ENCODE measurements at regions of chr11 and their contacts with region 1.

Region 1: GRCh38 chr11:61899146-61899841 is 7.9 kb upstream of the FADS3 start:
- DNase-seq: peak; percentile 89 to 98 (median 92)
- ATAC-seq: peak; percentile 96
- H3K4me3 ChIP-seq: no peak overlapping the region
- H3K4me3 Mint-ChIP-seq: no peak overlapping the region
- H3K27ac ChIP-seq: no peak overlapping the region
- H3K27ac Mint-ChIP-seq: peak overlapping the region; percentile 3
- H3K4me1 ChIP-seq: peaks cover 5% of the 10 kb centered on the region
- H3K4me1 Mint-ChIP-seq: peaks cover 6% of the 10 kb centered on the region
- H3K27me3 ChIP-seq: no peaks in the 10 kb centered on the region
- H3K27me3 Mint-ChIP-seq: peaks cover 5% of the 10 kb centered on the region
- CTCF ChIP-seq: peak; percentile 98

Region 2: GRCh38 chr11:61871158-61871597 is 28.1 kb before region 1 on chr11:
- CTCF ChIA-PET with region 1: interaction called, 10 read pairs
- POLR2A ChIA-PET with region 1: no interaction called
- intact Hi-C with region 1: loop called in 1 of 2 experiments (anchors 2 kb)
- DNase-seq: peak; percentile 30 to 74 (median 64)
- ATAC-seq: peak; percentile 94
- H3K4me3 ChIP-seq: no peak overlapping the region
- H3K4me3 Mint-ChIP-seq: peak overlapping the region; percentile 64
- H3K27ac ChIP-seq: no peak overlapping the region
- H3K27ac Mint-ChIP-seq: no peak overlapping the region
- H3K4me1 ChIP-seq: no peaks in the 10 kb centered on the region
- H3K4me1 Mint-ChIP-seq: peaks cover 3% of the 10 kb centered on the region
- H3K27me3 ChIP-seq: no peaks in the 10 kb centered on the region
- H3K27me3 Mint-ChIP-seq: no peaks in the 10 kb centered on the region
- CTCF ChIP-seq: peak; percentile 89

Region 3: DNA sequence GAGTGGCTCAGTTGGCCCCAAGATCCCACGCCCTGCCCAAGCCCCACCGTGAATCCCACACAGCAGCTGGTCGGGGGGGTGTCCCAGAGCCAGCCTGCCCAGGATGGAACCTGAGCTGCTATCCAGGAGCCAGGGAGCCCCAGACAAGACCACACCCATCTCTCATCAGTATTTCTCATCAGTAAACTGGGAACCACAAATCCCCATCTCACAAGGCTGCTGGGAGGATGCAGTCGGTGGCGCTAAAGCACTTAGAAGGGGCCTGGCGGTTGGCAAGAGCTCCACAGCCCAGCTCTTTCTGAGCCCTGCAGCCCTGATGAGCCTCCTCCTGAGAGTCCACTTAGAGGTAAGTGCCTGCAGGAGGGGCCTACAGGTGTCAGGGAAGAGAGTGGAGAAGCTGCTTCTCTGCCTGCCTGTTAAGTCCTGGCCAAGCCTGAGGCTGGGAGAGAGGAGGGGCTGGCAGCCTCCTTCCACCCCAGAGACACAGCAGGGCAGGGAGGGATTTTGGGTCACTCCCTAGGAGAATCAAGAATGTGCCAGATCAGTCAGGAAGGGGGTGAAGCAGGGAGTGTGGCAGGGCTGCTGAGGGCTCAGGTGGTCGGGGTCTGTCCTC is 14.0 kb before region 1 on chr11:
- CTCF ChIA-PET with region 1: interaction called, 53 read pairs
- POLR2A ChIA-PET with region 1: no interaction called
- intact Hi-C with region 1: no loop called
- DNase-seq: no peak
- ATAC-seq: no peak
- H3K4me3 ChIP-seq: no peak overlapping the region
- H3K4me3 Mint-ChIP-seq: no peak overlapping the region
- H3K27ac ChIP-seq: no peak overlapping the region
- H3K27ac Mint-ChIP-seq: no peak overlapping the region
- H3K4me1 ChIP-seq: peaks cover 4% of the 10 kb centered on the region
- H3K4me1 Mint-ChIP-seq: no peaks in the 10 kb centered on the region
- H3K27me3 ChIP-seq: no peaks in the 10 kb centered on the region
- H3K27me3 Mint-ChIP-seq: peaks cover 2% of the 10 kb centered on the region
- CTCF ChIP-seq: no peak

Region 4: DNA sequence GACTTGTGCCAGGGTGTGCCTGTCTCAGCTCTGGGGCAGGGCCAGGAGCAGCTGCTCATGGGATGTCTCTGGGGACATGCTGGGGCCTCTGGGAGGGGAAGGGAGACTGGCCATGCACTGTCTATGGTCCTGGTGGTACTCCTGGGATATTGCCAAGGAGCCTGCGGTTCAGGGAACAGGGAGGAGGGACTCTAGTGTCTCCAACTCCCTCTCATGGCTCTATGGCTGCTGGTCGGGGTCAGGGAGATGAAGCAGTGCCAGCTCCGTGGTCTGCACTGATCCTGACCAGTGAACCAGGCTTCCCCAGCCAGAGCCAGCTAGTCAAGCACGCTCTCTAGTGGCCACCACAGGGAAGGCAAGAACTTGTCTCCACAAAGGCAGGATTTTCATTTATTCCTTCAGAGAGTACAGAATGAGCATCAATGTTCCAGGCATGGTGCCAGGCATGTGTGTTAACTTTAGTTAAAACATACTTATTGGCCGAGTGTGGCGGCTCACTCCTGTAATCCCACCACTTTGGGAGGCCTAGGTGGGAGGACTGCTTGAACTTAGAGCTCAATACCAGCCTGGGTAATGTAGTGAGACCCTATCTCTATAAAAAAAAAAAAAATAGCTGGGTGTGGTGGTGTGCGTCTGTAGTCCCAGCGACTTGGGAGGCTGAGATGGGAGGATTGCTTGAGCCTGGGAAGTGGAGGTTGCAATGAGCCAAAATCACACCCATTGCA is 48.4 kb after region 1 on chr11:
- CTCF ChIA-PET with region 1: interaction called, 42 read pairs
- POLR2A ChIA-PET with region 1: interaction called, 4 read pairs
- intact Hi-C with region 1: loop called (anchors 1 kb)
- DNase-seq: peak; percentile 34 to 78 (median 69)
- ATAC-seq: peak; percentile 82
- H3K4me3 ChIP-seq: no peak overlapping the region
- H3K4me3 Mint-ChIP-seq: no peak overlapping the region
- H3K27ac ChIP-seq: no peak overlapping the region
- H3K27ac Mint-ChIP-seq: no peak overlapping the region
- H3K4me1 ChIP-seq: no peaks in the 10 kb centered on the region
- H3K4me1 Mint-ChIP-seq: no peaks in the 10 kb centered on the region
- H3K27me3 ChIP-seq: no peaks in the 10 kb centered on the region
- H3K27me3 Mint-ChIP-seq: peaks cover 8% of the 10 kb centered on the region
- CTCF ChIP-seq: peak; percentile 76

Region 5: DNA sequence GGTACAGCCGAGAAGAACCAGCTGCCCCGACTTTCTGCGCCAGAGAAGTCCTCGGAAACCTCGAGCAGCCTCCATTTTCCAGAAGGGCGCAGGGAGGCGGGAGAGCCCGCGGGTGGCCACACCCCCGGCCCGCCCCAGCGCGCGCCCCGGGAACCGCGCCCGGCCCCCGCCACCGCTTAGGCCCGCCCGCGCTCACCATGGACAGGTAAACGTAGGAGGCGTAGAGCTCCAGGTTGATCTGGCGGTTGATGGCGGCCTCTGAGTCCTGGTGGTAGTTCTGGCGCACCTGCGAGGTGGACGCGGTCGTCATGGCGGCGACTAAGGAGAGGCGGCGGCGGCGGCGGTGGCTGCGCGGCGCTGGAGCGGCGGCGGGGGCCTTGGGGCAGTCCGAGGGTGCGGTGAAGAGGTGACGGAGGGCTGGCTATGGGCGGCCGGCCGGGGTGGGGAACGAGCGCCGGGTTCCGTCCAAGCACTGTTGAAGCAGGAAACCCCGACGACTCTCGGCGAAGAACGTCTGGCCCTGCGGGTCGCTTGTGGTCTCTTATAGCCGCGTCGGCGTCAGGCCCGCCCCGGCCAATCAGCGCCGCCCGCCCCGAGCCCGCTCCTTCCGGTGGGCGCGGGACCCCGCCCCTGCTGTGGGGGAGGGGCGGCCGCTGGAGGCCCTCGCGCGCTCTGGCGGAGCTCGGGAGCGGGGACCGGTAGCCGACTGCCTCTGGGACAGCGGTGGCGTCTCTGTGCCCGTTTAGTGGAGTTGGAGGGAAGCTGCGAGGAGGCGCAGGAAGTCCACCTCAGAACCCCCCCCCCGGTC is 68.0 kb after region 1 on chr11 and contains the start of gene FTH1:
- CTCF ChIA-PET with region 1: interaction called, 3 read pairs
- POLR2A ChIA-PET with region 1: interaction called, 3 read pairs
- intact Hi-C with region 1: loop called in 1 of 2 experiments (anchors 5 kb)
- DNase-seq: peak; percentile 82 to 95 (median 91)
- ATAC-seq: peak; percentile 74
- H3K4me3 ChIP-seq: peak within 1 kb of the TSS; percentile 98 to 100
- H3K4me3 Mint-ChIP-seq: peak within 1 kb of the TSS; percentile 96
- H3K27ac ChIP-seq: peak within 1 kb of the TSS; percentile 72 to 96
- H3K27ac Mint-ChIP-seq: peak within 1 kb of the TSS; percentile 98
- H3K4me1 ChIP-seq: peaks cover 43% of the 10 kb centered on the region
- H3K4me1 Mint-ChIP-seq: peaks cover 59% of the 10 kb centered on the region
- H3K27me3 ChIP-seq: no peaks in the 10 kb centered on the region
- H3K27me3 Mint-ChIP-seq: no peaks in the 10 kb centered on the region
- CTCF ChIP-seq: no peak
- total RNA-seq, gene FTH1: 2,788 to 2,859 TPM

Region 6: DNA sequence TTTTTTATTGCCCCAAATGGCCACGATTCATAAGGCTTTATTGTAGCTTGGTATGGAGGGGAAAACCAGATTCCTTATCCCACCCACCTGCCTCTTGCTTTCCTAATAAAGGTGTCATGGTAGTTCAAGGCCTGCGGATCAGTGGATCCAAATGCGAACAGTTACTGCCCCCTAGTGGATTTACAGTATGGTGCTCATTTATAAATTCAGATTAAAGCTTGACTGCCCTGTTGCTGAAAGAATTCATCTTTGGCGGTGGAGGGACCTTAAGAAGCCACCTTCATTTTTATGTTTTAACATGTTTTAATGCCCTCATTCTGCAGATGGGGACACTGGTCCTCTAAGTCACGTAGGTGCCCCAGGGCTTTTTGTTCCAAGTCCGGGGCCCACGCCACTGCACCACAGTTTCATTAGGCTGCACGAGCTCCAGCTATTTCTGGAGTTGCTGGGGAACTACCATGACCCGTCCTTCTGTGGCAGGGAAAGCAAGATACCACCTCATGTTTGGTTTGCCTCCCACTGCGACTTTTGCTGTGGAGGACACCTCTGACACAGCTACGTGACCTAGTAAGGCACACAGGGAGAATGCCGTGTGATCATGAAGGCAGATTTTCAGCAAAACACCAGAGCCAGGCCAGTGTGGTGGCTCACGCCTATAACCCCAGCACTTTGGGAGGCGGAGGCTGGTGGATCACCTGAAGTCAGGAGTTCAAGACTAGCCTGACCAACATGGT is 208.9 kb after region 1 on chr11:
- CTCF ChIA-PET with region 1: interaction called, 126 read pairs
- POLR2A ChIA-PET with region 1: interaction called, 3 read pairs
- intact Hi-C with region 1: loop called (anchors 1 kb)
- DNase-seq: peak in 7 of 9 experiments; percentile 8 to 80 (median 45)
- ATAC-seq: peak; percentile 65
- H3K4me3 ChIP-seq: no peak overlapping the region
- H3K4me3 Mint-ChIP-seq: no peak overlapping the region
- H3K27ac ChIP-seq: no peak overlapping the region
- H3K27ac Mint-ChIP-seq: no peak overlapping the region
- H3K4me1 ChIP-seq: peaks cover 19% of the 10 kb centered on the region
- H3K4me1 Mint-ChIP-seq: peaks cover 19% of the 10 kb centered on the region
- H3K27me3 ChIP-seq: no peaks in the 10 kb centered on the region
- H3K27me3 Mint-ChIP-seq: no peaks in the 10 kb centered on the region
- CTCF ChIP-seq: peak; percentile 70

Measured in CD8-positive, alpha-beta T cell (primary cell).